ENCODE measurements at regions of chr2 and their contacts with region 1.

Region 1: DNA sequence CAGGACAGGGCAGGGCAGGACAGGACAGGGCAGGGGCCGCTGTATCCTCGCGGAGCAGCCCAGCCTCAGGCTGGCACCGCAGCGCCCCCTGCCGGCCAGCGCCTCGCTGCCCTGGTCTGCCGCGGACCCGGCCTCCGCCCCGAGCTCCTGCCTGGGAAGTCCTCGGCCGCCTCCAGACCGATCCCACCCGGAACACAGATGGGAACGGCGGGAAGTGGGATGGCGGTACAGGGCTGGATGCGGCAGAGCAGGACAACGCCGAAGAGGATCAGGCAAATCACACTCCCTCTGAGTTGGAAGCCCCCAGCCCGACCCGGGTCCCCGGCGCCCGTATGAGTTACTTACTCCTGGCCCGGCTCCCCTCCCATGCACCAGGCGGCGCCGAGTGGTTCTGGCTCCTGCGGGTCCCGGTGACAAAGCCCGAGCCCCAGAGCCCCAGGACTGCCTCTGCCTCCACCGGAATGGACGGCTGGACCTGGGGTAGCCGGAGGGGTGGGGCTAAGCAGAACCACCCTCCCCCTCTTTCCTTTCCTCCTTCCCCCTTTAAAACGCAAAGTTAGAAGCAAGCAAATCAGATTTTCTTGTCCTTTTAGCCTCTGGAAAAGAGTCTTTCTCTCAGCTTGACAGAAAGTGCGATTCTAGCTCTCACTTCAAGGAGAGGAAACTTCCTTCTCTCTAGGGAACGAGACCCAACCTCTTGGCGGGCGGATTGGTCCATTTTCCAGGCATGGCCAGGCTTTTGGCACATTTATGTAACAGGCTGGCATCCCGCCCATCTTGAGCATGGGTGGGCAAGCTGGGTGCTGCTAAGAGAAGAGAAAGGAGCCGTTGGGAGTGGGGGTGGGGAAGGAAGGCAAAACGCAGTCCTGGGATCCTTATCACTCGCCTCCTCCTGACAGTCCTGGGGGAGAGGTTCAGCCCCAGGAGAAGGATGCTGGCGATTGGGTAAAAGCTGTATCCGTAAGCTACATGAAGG is at the start of gene TP53I3:
- DNase-seq: peak; percentile 82
- H3K4me3 ChIP-seq: peak within 1 kb of the TSS; percentile 59 to 67 (median 66)
- H3K27ac ChIP-seq: peak within 1 kb of the TSS; percentile 76
- H3K4me1 ChIP-seq: peaks cover 22% of the 10 kb centered on the region
- H3K27me3 ChIP-seq: no peaks in the 10 kb centered on the region
- CTCF ChIP-seq: peak; percentile 66 to 85
- total RNA-seq, gene TP53I3: 75.3 to 85.8 TPM

Region 2: GRCh38 chr2:23824777-23825212 is 259.9 kb before region 1 on chr2:
- CTCF ChIA-PET with region 1: no interaction called
- dilution Hi-C with region 1: no loop called
- in situ Hi-C with region 1: no loop called
- intact Hi-C with region 1: loop called (anchors 1 kb)
- DNase-seq: no peak
- H3K4me3 ChIP-seq: no peak overlapping the region
- H3K27ac ChIP-seq: peak overlapping the region; percentile 24
- H3K4me1 ChIP-seq: peaks cover 31% of the 10 kb centered on the region
- H3K27me3 ChIP-seq: no peaks in the 10 kb centered on the region
- CTCF ChIP-seq: peak; percentile 66 to 72

Region 3: GRCh38 chr2:23939987-23940717 is 144.5 kb before region 1 on chr2 and contains the start of gene UBXN2A:
- CTCF ChIA-PET with region 1: no interaction called
- dilution Hi-C with region 1: no loop called
- in situ Hi-C with region 1: no loop called
- intact Hi-C with region 1: loop called (anchors 5 kb)
- DNase-seq: peak; percentile 77
- H3K4me3 ChIP-seq: peak within 1 kb of the TSS; percentile 90 to 99 (median 97)
- H3K27ac ChIP-seq: peak within 1 kb of the TSS; percentile 86
- H3K4me1 ChIP-seq: peaks cover 24% of the 10 kb centered on the region
- H3K27me3 ChIP-seq: no peaks in the 10 kb centered on the region
- CTCF ChIP-seq: no peak
- total RNA-seq, gene UBXN2A: 18.7 to 19.1 TPM

Region 4: DNA sequence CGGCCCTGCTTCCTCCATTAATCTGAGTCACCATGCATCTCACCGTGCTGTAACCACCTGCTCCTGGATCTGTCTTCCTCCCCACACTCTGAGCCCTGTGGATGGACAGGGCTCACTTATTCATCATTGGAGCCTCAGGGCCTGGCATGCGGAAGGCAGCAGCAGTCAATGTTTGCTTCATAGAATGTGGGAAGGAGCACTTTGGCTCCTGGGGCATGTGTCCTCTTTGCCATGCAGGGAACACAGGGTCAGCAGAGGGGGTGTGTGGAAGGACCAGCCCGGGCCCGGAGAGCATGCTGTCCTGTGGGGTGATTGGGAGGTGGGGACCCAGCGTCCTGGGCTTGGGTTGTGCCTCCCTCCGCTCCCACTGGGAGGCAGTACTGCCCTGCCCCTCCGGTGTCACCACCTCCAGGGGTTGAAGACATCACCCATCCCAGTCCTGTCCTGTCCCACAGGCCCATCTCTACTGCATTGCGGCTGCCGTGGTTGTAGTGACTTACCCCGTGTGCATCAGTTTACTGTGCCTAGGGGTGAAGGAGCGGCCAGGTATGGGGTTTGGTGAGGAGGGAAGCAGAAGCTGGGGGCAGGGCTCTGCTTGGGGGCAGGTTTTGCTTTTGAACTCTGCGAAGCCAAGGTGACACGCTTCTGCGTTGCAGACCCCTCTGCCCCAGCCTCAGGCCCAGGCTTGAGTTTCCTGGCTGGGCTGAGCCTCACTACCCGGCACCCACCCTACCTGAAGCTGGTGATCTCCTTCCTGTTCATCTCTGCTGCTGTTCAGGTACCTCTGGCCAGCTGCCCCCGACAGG is 63.3 kb before region 1 on chr2:
- CTCF ChIA-PET with region 1: no interaction called
- dilution Hi-C with region 1: no loop called
- in situ Hi-C with region 1: no loop called
- intact Hi-C with region 1: loop called (anchors 1 kb)
- DNase-seq: peak; percentile 79
- H3K4me3 ChIP-seq: no peak overlapping the region
- H3K27ac ChIP-seq: no peak overlapping the region
- H3K4me1 ChIP-seq: peaks cover 16% of the 10 kb centered on the region
- H3K27me3 ChIP-seq: no peaks in the 10 kb centered on the region
- CTCF ChIP-seq: peak; percentile 22 to 49

Region 5: GRCh38 chr2:24164125-24164973 is 79.7 kb after region 1 on chr2:
- CTCF ChIA-PET with region 1: no interaction called
- dilution Hi-C with region 1: no loop called
- in situ Hi-C with region 1: no loop called
- intact Hi-C with region 1: loop called (anchors 1 kb)
- DNase-seq: no peak
- H3K4me3 ChIP-seq: no peak overlapping the region
- H3K27ac ChIP-seq: no peak overlapping the region
- H3K4me1 ChIP-seq: no peaks in the 10 kb centered on the region
- H3K27me3 ChIP-seq: no peaks in the 10 kb centered on the region
- CTCF ChIP-seq: peak; percentile 49 to 69

Region 6: GRCh38 chr2:24269265-24269664 is 184.6 kb after region 1 on chr2:
- CTCF ChIA-PET with region 1: no interaction called
- dilution Hi-C with region 1: no loop called
- in situ Hi-C with region 1: no loop called
- intact Hi-C with region 1: no loop called
- DNase-seq: peak; percentile 56
- H3K4me3 ChIP-seq: no peak overlapping the region
- H3K27ac ChIP-seq: no peak overlapping the region
- H3K4me1 ChIP-seq: peaks cover 9% of the 10 kb centered on the region
- H3K27me3 ChIP-seq: no peaks in the 10 kb centered on the region
- CTCF ChIP-seq: no peak